IMR-90 (cell line): ENCODE measurements at regions of chr5 and their contacts with region 1.

Region 1: GRCh38 chr5:120152472-120152871 is 311.6 kb upstream of the PRR16 start:
- DNase-seq: peak; percentile 95
- ATAC-seq: peak; percentile 89; the same call in 1 of the 2 replicates
- H3K4me3 ChIP-seq: no peak overlapping the region
- H3K27ac ChIP-seq: peak overlapping the region; percentile 75
- H3K4me1 ChIP-seq: peaks cover 12% of the 10 kb centered on the region
- H3K27me3 ChIP-seq: no peaks in the 10 kb centered on the region
- CTCF ChIP-seq: no peak
- POLR2A ChIP-seq: no peak
- RAD21 ChIP-seq: no peak

Region 2: DNA sequence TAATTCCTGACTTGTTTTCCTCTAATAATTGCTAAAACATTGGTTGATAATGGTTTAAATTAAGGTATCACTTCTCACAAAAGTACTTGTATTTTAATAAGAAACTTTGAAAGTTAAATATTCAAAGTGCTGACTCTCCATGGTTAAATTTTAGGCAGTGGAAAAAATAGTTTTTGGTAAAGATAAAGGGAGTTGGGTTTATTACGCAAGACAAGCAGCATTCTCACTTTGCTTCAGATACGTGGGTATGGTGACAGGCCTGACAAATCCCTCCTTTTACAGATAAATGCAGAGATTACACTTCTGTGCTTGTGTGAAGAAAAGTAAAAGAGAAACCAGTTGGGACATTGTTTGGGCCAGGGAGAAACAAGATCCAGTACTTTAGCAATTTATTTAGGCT is 537.6 kb before region 1 on chr5:
- CTCF ChIA-PET with region 1: no interaction called
- POLR2A ChIA-PET with region 1: no interaction called
- dilution Hi-C with region 1: no loop called
- in situ Hi-C with region 1: no loop called
- intact Hi-C with region 1: no loop called
- DNase-seq: no peak
- ATAC-seq: no peak
- H3K4me3 ChIP-seq: no peak overlapping the region
- H3K27ac ChIP-seq: no peak overlapping the region
- H3K4me1 ChIP-seq: no peaks in the 10 kb centered on the region
- H3K27me3 ChIP-seq: no peaks in the 10 kb centered on the region
- CTCF ChIP-seq: no peak
- POLR2A ChIP-seq: no peak
- RAD21 ChIP-seq: no peak

Region 3: DNA sequence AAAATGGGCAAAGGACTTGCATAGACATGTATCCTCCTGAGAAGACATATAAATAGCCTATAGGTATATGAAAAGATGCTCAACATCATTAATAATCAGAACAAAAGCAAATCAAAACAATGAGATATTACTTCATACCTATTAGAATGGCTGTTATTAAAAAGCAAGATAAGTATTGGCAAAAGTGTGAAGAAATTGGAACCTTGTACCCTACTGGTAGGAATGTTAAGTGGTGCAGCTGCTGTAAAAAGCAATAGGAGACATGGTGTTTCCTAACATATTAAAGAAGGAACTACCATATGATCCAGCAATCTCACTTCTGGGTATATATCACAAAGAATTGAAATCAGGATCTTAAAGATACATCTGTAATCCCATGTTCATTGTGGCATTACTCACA is 241.8 kb after region 1 on chr5:
- CTCF ChIA-PET with region 1: no interaction called
- POLR2A ChIA-PET with region 1: no interaction called
- dilution Hi-C with region 1: no loop called
- in situ Hi-C with region 1: no loop called
- intact Hi-C with region 1: loop called (anchors 5 kb)
- DNase-seq: no peak
- ATAC-seq: no peak
- H3K4me3 ChIP-seq: no peak overlapping the region
- H3K27ac ChIP-seq: no peak overlapping the region
- H3K4me1 ChIP-seq: no peaks in the 10 kb centered on the region
- H3K27me3 ChIP-seq: no peaks in the 10 kb centered on the region
- CTCF ChIP-seq: no peak
- POLR2A ChIP-seq: no peak
- RAD21 ChIP-seq: no peak

Region 4: DNA sequence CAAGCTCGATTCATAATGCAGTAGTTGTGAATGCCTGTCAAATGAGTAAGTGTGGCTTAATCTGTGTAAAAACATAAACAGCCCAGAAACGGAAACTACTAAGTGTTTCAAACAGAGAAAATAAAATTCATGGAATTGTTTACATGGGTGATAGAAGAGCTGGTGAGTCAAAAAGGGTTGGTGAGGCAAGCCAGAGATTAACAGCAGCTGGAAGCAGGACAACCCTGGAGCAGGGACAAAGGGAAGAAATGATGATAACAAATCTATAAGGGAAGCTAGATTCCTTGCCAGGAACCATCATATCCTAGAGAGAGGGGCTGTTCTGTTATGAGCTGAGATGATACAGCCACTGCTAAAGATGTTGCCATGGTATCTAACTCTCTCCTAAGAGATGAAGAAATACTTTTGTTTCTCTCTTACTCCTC is 293.6 kb after region 1 on chr5:
- CTCF ChIA-PET with region 1: no interaction called
- POLR2A ChIA-PET with region 1: no interaction called
- dilution Hi-C with region 1: no loop called
- in situ Hi-C with region 1: no loop called
- intact Hi-C with region 1: loop called (anchors 5 kb)
- DNase-seq: peak; percentile 96
- ATAC-seq: peak; percentile 90
- H3K4me3 ChIP-seq: no peak overlapping the region
- H3K27ac ChIP-seq: peak overlapping the region; percentile 46; the same call in 1 of the 2 replicates
- H3K4me1 ChIP-seq: peaks cover 5% of the 10 kb centered on the region
- H3K27me3 ChIP-seq: no peaks in the 10 kb centered on the region
- CTCF ChIP-seq: no peak
- POLR2A ChIP-seq: no peak
- RAD21 ChIP-seq: no peak

Region 5: GRCh38 chr5:120779674-120780073 is 627.2 kb after region 1 on chr5:
- CTCF ChIA-PET with region 1: no interaction called
- POLR2A ChIA-PET with region 1: no interaction called
- dilution Hi-C with region 1: no loop called
- in situ Hi-C with region 1: no loop called
- intact Hi-C with region 1: loop called (anchors 10 kb)
- DNase-seq: peak; percentile 45
- ATAC-seq: peak; percentile 46
- H3K4me3 ChIP-seq: no peak overlapping the region
- H3K27ac ChIP-seq: peak overlapping the region; percentile 94
- H3K4me1 ChIP-seq: 0 out of 2 replicates have a peak, but pooled peaks cover 2% of the 10 kb centered on the region
- H3K27me3 ChIP-seq: no peaks in the 10 kb centered on the region
- CTCF ChIP-seq: no peak
- POLR2A ChIP-seq: no peak
- RAD21 ChIP-seq: no peak